Activated CD4-positive, alpha-beta memory T cell treated with anti-CD3 and anti-CD28 coated beads, Interleukin-2, amount 10 ng/mL, durations not matched to agents 7 days and 5 days (primary cell): ENCODE measurements at regions of chr1 and their contacts with region 1.

Region 1: GRCh38 chr1:244864253-244865027 is at the start of gene HNRNPU:
- DNase-seq: peak; percentile 96
- H3K4me3 Mint-ChIP-seq: peak within 1 kb of the TSS; percentile 81
- H3K27ac Mint-ChIP-seq: peak within 1 kb of the TSS; percentile 94
- H3K4me1 Mint-ChIP-seq: peaks cover 42% of the 10 kb centered on the region
- H3K27me3 Mint-ChIP-seq: no peaks in the 10 kb centered on the region
- total RNA-seq, gene HNRNPU: 364 to 371 TPM

Region 2: DNA sequence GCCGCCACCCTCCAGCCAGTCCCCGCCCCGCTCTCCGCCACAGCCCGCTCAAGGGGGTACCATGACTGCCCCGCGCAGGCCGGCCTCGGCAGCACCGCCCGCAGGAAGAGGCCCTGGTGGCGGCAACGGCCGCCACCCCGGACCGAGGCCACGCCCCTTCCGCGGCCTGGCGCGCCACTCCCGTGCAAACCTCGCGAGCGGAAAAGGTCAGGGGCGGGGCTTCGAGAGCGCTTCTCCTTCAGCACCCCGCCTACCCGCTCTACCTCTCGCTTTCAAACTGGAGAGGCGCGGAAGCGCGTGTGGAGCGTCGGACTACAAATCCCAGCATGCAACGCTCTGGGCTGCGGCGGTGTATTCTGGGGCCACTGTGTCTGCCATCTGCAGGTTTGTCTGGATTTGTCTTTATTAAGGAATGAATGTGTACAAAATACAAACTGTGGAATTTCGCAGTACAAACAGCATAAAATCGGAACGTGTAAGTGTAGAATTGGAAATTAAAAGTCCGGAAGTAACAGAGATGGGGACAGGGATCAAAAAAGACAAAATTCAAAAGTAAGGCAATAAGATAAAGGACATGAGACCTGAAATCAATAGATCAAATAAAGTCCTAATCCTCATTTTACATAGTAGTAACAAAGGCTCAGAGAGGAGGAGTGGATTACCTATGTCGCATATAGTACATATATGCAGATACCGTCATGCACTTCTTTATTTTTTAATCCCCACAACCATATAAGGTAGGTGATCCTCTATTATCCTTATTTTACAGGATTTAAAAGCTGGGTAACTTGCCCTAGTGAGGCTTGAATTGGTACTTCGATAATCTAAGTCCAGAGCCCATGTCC is 412.3 kb before region 1 on chr1:
- CTCF ChIA-PET with region 1: no interaction called
- POLR2A ChIA-PET with region 1: interaction called, 11 read pairs
- DNase-seq: peak; percentile 99
- H3K4me3 Mint-ChIP-seq: peak overlapping the region; percentile 90
- H3K27ac Mint-ChIP-seq: peak overlapping the region; percentile 93
- H3K4me1 Mint-ChIP-seq: peaks cover 38% of the 10 kb centered on the region
- H3K27me3 Mint-ChIP-seq: no peaks in the 10 kb centered on the region

Region 3: GRCh38 chr1:244652699-244653466 is 211.6 kb before region 1 on chr1 and contains the start of gene DESI2:
- CTCF ChIA-PET with region 1: interaction called, 3 read pairs
- POLR2A ChIA-PET with region 1: interaction called, 18 read pairs
- DNase-seq: peak; percentile 98
- H3K4me3 Mint-ChIP-seq: peak within 1 kb of the TSS; percentile 76
- H3K27ac Mint-ChIP-seq: peak within 1 kb of the TSS; percentile 79
- H3K4me1 Mint-ChIP-seq: peaks cover 15% of the 10 kb centered on the region
- H3K27me3 Mint-ChIP-seq: peaks cover 4% of the 10 kb centered on the region
- total RNA-seq, gene DESI2: 26.6 to 31.4 TPM

Region 4: GRCh38 chr1:244964112-244964971 is 99.9 kb after region 1 on chr1:
- CTCF ChIA-PET with region 1: interaction called, 6 read pairs
- POLR2A ChIA-PET with region 1: interaction called, 146 read pairs
- DNase-seq: peak; percentile 24
- H3K4me3 Mint-ChIP-seq: no peak overlapping the region
- H3K27ac Mint-ChIP-seq: no peak overlapping the region
- H3K4me1 Mint-ChIP-seq: peaks cover 23% of the 10 kb centered on the region
- H3K27me3 Mint-ChIP-seq: no peaks in the 10 kb centered on the region

Region 5: GRCh38 chr1:244970661-244971551 is 106.5 kb after region 1 on chr1:
- CTCF ChIA-PET with region 1: interaction called, 12 read pairs
- POLR2A ChIA-PET with region 1: interaction called, 146 read pairs
- DNase-seq: peak; percentile 91
- H3K4me3 Mint-ChIP-seq: peak overlapping the region; percentile 86
- H3K27ac Mint-ChIP-seq: peak overlapping the region; percentile 95
- H3K4me1 Mint-ChIP-seq: peaks cover 22% of the 10 kb centered on the region
- H3K27me3 Mint-ChIP-seq: no peaks in the 10 kb centered on the region